Caco-2 (cell line): ENCODE measurements at regions of chr21 and their contacts with region 1.

Region 1: DNA sequence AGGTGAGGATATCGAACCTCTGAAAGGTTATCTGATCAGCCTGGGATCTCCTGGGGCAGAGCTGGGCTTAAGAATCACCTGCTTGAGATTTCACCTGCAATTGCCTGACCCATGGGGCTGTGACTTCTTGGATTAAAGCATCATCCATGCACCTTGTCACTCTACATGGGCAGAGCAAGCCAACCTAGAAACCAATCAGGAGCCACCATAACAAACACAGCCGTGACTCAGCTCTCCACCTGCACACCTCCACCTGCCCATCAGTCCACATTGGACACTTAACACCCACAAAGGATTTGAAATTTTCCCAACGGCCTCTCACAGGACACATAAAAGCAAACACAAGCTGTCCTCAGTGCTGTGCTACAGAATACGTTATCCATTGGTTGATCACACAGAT is 35.1 kb upstream of the ETS2 start:
- DNase-seq: no peak
- H3K4me3 ChIP-seq: no peak overlapping the region
- H3K4me3 Mint-ChIP-seq: no peak overlapping the region
- H3K27ac Mint-ChIP-seq: peak overlapping the region; percentile 74
- H3K4me1 ChIP-seq: peaks cover 33% of the 10 kb centered on the region
- H3K4me1 Mint-ChIP-seq: peaks cover 26% of the 10 kb centered on the region
- H3K27me3 ChIP-seq: no peaks in the 10 kb centered on the region
- H3K27me3 Mint-ChIP-seq: no peaks in the 10 kb centered on the region
- CTCF ChIP-seq: no peak

Region 2: DNA sequence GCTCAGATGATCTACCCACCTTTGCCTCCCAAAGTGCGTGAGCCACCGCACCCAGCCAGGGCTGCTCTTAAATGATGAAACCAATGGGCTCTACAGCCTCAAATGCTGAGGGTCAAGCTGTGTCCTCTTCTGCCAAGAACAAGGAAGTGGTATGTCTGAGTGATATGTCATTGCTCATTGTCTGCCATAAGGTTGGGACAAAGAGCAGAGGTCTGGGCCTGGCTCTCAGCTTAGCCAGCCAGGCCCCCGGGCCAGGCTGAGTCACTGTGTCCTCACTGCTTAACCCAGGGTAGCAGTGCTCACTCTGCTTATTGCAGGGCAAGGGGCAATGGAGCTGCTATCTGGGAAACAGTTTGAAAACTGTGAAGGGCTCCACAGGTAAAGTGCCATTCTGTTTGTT is 26.8 kb after region 1 on chr21:
- CTCF ChIA-PET with region 1: no interaction called
- POLR2A ChIA-PET with region 1: no interaction called
- intact Hi-C with region 1: loop called (anchors 1 kb)
- DNase-seq: peak; percentile 65 to 85
- H3K4me3 ChIP-seq: no peak overlapping the region
- H3K4me3 Mint-ChIP-seq: no peak overlapping the region
- H3K27ac Mint-ChIP-seq: peak overlapping the region; percentile 81
- H3K4me1 ChIP-seq: peaks cover 45% of the 10 kb centered on the region
- H3K4me1 Mint-ChIP-seq: peaks cover 50% of the 10 kb centered on the region
- H3K27me3 ChIP-seq: no peaks in the 10 kb centered on the region
- H3K27me3 Mint-ChIP-seq: no peaks in the 10 kb centered on the region
- CTCF ChIP-seq: no peak